ENCODE measurements at regions of chr3 and their contacts with region 1.

Region 1: GRCh38 chr3:122942937-122943827 is 84.4 kb downstream of the SEMA5B start:
- DNase-seq: peak; percentile 76 to 87 (median 82)
- H3K4me3 ChIP-seq: no peak overlapping the region
- H3K27ac ChIP-seq: no peak overlapping the region
- H3K4me1 ChIP-seq: peaks cover 0 to 11% of the 10 kb centered on the region in 2 donors
- H3K27me3 ChIP-seq: no peaks in the 10 kb centered on the region
- CTCF ChIP-seq: peak; percentile 85 to 94 (median 90)
- POLR2A ChIP-seq: no peak

Region 2: GRCh38 chr3:123258811-123259420 is 315.7 kb after region 1 on chr3:
- intact Hi-C with region 1: loop called (anchors 5 kb)
- DNase-seq: no peak
- H3K4me3 ChIP-seq: no peak overlapping the region
- H3K27ac ChIP-seq: no peak overlapping the region
- H3K4me1 ChIP-seq: peaks cover 0 to 7% of the 10 kb centered on the region in 2 donors
- H3K27me3 ChIP-seq: no peaks in the 10 kb centered on the region
- CTCF ChIP-seq: peak; percentile 40 to 92 (median 81)
- POLR2A ChIP-seq: no peak

Region 3: GRCh38 chr3:123459881-123460280 is 516.7 kb after region 1 on chr3:
- intact Hi-C with region 1: no loop called
- DNase-seq: peak; percentile 33 to 80 (median 66)
- H3K4me3 ChIP-seq: no peak overlapping the region
- H3K27ac ChIP-seq: no peak overlapping the region
- H3K4me1 ChIP-seq: no peaks in the 10 kb centered on the region
- H3K27me3 ChIP-seq: no peaks in the 10 kb centered on the region
- CTCF ChIP-seq: no peak
- POLR2A ChIP-seq: no peak

Measured in adrenal gland (tissue), 19 donors.